ENCODE measurements at regions of chr15 and their contacts with region 1.

Region 1: GRCh38 chr15:75903331-75904239 is at the start of gene FBXO22:
- DNase-seq: peak; percentile 78 to 92
- H3K4me3 ChIP-seq: peak within 1 kb of the TSS; percentile 99
- H3K27ac ChIP-seq: peak within 1 kb of the TSS; percentile 84
- H3K4me1 ChIP-seq: peaks cover 17% of the 10 kb centered on the region
- H3K27me3 ChIP-seq: no peaks in the 10 kb centered on the region
- CTCF ChIP-seq: no peak
- total RNA-seq, gene FBXO22: 37.5 and 47.9 TPM in 2 replicates

Region 2: GRCh38 chr15:75842722-75843551 is 60.6 kb before region 1 on chr15 and contains the start of gene UBE2Q2:
- CTCF ChIA-PET with region 1: no interaction called
- POLR2A ChIA-PET with region 1: interaction called, 17 read pairs
- intact Hi-C with region 1: no loop called
- DNase-seq: peak in 1 of 2 experiments; percentile 62
- H3K4me3 ChIP-seq: peak within 1 kb of the TSS; percentile 83
- H3K27ac ChIP-seq: no peak within 1 kb of the TSS
- H3K4me1 ChIP-seq: peaks cover 13% of the 10 kb centered on the region
- H3K27me3 ChIP-seq: no peaks in the 10 kb centered on the region
- CTCF ChIP-seq: no peak
- total RNA-seq, gene UBE2Q2: 15.6 and 20.0 TPM in 2 replicates

Region 3: DNA sequence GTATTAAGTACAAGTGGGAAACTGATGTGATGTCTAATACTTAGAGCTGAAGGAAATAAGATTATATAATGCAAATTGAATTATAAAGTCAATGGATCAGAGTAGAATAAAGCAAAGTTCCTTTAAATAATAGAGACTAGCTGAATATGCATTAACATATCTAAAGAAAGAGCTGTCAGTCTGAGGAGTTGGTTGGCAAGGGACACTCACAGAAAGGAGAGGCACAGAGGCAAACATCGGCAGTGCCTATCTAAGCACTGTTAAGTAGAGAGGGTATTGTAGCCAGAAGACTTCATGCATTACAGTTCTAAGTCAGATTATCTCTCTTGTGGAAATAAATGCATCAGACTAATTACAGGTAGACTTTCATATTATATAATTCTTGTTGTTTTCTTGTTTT is 92.0 kb after region 1 on chr15:
- CTCF ChIA-PET with region 1: interaction called, 11 read pairs
- POLR2A ChIA-PET with region 1: no interaction called
- intact Hi-C with region 1: no loop called
- DNase-seq: no peak
- H3K4me3 ChIP-seq: no peak overlapping the region
- H3K27ac ChIP-seq: no peak overlapping the region
- H3K4me1 ChIP-seq: no peaks in the 10 kb centered on the region
- H3K27me3 ChIP-seq: no peaks in the 10 kb centered on the region
- CTCF ChIP-seq: no peak

Measured in PC-9 (cell line).